ENCODE measurements at regions of chr6 and their contacts with region 1.

Region 1: GRCh38 chr6:33851959-33852358 is 48.2 kb upstream of the MLN start:
- DNase-seq: no peak
- H3K4me3 ChIP-seq: no peak overlapping the region
- H3K27ac ChIP-seq: no peak overlapping the region
- H3K4me1 ChIP-seq: peaks cover 4% of the 10 kb centered on the region
- H3K27me3 ChIP-seq: no peaks in the 10 kb centered on the region
- CTCF ChIP-seq: peak; percentile 50 to 78

Region 2: GRCh38 chr6:33929575-33930288 is 77.8 kb after region 1 on chr6:
- CTCF ChIA-PET with region 1: no interaction called
- dilution Hi-C with region 1: loop called (anchors 5 kb)
- in situ Hi-C with region 1: no loop called
- intact Hi-C with region 1: no loop called
- DNase-seq: no peak
- H3K4me3 ChIP-seq: no peak overlapping the region
- H3K27ac ChIP-seq: no peak overlapping the region
- H3K4me1 ChIP-seq: no peaks in the 10 kb centered on the region
- H3K27me3 ChIP-seq: no peaks in the 10 kb centered on the region
- CTCF ChIP-seq: no peak

Region 3: GRCh38 chr6:34027445-34027936 is 175.5 kb after region 1 on chr6:
- CTCF ChIA-PET with region 1: no interaction called
- dilution Hi-C with region 1: no loop called
- in situ Hi-C with region 1: no loop called
- intact Hi-C with region 1: loop called (anchors 1 kb)
- DNase-seq: peak; percentile 11
- H3K4me3 ChIP-seq: no peak overlapping the region
- H3K27ac ChIP-seq: no peak overlapping the region
- H3K4me1 ChIP-seq: no peaks in the 10 kb centered on the region
- H3K27me3 ChIP-seq: no peaks in the 10 kb centered on the region
- CTCF ChIP-seq: peak; percentile 58 to 85

Region 4: DNA sequence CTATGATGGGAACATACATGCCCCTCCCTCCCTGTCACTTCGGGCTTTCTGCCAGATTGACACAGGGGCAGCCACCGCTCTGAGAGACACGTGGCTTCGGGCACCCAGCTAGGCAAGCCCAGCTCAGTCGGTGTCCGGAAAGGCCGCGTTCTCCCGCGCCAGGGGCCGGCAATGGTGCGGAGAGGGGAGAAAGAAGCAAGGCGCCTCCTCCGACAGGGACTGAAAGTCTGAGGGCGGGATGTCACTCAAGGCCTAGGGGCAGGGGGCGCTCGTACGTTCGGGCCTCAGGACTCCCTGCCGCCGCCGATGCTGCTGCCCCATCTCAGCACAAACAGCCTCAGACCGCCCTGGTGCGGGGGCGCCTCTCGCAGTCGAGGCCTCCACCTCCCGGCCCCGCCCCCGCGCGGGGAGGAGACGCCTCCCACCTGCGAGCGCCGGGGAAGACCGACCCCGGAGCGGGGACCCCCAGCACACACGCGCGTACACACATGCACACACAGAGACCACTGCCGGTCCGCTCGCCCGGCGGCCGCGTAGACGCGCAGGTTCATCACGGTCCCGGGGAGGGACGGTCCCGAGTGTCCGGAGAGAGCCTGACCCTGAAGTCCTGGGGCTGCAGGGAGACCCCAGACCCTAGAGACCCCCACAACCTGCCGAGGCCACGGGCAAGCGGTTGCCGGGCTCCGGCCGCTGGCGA is 292.1 kb after region 1 on chr6:
- CTCF ChIA-PET with region 1: no interaction called
- dilution Hi-C with region 1: no loop called
- in situ Hi-C with region 1: no loop called
- intact Hi-C with region 1: loop called (anchors 5 kb)
- DNase-seq: no peak
- H3K4me3 ChIP-seq: peak overlapping the region in 1 of 3 experiments; percentile 9
- H3K27ac ChIP-seq: no peak overlapping the region
- H3K4me1 ChIP-seq: peaks cover 23% of the 10 kb centered on the region
- H3K27me3 ChIP-seq: peaks cover 28% of the 10 kb centered on the region
- CTCF ChIP-seq: no peak

Measured in mammary epithelial cell (primary cell).